Activated CD4-positive, alpha-beta T cell treated with anti-CD3 and anti-CD28 coated beads for 36 hours (primary cell): ENCODE measurements at regions of chr2 and their contacts with region 1.

Region 1: DNA sequence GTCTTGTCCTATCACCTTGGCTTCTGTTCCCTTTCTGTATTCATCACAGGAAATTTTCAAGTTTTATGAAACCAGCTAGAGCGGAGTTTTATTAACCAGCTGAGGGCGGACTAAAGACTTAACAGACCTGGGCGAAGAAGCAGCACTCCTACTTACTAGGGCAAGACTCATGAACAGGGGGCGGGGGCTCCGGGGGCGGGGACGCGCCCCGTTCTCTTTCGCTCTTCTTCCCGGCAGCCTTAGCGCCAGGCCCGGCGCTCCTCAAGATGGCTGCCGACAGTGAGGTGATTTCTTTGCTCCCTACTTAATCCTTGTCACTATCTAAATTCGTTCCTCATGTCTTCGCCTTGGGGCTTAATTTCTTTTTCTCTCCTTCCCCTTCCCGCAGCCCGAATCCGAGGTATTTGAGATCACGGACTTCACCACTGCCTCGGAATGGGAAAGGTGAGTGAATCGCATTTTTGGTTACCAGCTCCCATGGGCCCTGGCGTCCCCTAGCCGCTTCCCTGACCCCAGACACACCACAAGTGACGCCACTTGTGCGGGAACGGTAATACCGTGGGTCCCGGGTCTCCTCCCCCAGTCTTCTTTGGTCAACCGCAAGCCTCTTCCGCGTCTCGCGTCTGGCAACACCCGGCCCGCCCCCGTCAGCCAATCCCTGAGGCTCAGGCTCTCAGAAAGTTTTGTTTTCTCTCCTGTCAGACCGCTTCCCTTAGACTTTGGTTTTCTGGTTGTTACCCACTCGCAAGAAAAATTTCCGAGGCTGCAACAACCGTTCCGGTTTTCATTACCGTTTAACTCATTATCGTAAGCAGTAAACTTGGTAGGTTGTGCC is at the start of gene RAB3GAP1:
- DNase-seq: peak; percentile 96
- ATAC-seq: peak; percentile 79
- H3K4me3 Mint-ChIP-seq: peak within 1 kb of the TSS; percentile 92
- H3K27ac Mint-ChIP-seq: peak within 1 kb of the TSS; percentile 100
- H3K4me1 Mint-ChIP-seq: peaks cover 40% of the 10 kb centered on the region
- H3K27me3 Mint-ChIP-seq: no peaks in the 10 kb centered on the region
- total RNA-seq, gene RAB3GAP1: 34.5 to 39.8 TPM

Region 2: DNA sequence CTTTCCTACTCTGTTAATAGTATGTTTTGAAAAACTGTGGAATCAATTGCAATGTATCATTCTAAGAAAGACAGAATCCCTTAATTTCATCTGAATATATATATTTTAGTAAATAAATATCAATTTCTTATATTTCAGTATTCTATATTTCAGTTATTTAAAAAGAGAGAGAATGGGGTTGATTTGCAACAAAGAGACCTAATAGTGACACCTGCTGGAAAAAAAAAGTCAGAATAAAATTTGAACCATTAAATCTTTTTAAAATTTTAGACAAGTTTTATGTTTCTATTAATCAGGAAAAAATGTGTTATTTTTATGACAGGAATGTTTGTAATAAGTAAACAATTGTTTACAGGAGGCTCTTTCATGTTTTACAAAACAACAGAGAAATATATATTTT is 154.3 kb before region 1 on chr2:
- CTCF ChIA-PET with region 1: no interaction called
- POLR2A ChIA-PET with region 1: no interaction called
- intact Hi-C with region 1: no loop called
- DNase-seq: no peak
- ATAC-seq: no peak
- H3K4me3 Mint-ChIP-seq: no peak overlapping the region
- H3K27ac Mint-ChIP-seq: no peak overlapping the region
- H3K4me1 Mint-ChIP-seq: no peaks in the 10 kb centered on the region
- H3K27me3 Mint-ChIP-seq: no peaks in the 10 kb centered on the region

Region 3: DNA sequence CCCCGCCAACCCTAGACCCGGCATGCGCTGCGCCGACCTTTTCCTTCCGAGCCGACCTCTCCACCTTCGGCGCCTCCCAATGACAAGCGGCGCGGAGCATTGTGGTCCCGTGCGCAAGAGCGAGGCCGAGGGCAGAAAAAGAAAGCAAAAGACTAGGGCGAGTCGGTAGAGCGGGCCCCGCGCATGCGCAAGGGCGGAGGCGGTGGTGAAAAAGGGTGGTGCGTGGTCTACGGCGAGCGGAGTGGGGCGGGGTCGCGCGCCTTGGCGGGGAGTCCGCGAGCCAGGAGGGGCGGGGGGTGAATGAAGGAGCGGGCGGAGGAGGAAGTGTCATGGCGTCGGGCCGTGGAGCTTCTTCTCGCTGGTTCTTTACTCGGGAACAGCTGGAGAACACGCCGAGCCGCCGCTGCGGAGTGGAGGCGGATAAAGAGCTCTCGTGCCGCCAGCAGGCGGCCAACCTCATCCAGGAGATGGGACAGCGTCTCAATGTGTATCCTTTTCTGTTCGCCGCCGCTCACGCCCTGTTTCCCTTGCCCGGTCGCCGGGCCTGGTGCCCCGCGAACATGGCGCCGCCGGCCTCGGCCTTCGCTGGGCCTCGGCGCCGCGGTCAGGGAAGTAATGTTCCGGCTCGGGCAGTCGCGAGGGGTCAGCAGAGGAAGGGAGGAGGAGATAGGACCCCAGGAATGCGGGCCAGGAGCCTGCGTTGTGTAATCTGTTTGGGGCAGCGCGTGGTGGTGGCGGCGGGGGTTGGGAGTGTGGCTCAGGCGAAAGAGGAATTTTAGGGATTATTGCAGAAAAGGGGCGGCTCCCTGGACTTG is 133.5 kb before region 1 on chr2 and contains the start of gene CCNT2:
- CTCF ChIA-PET with region 1: no interaction called
- POLR2A ChIA-PET with region 1: interaction called, 3 read pairs
- intact Hi-C with region 1: loop called (anchors 1 kb)
- DNase-seq: peak; percentile 100
- ATAC-seq: peak; percentile 89
- H3K4me3 Mint-ChIP-seq: peak within 1 kb of the TSS; percentile 92
- H3K27ac Mint-ChIP-seq: peak within 1 kb of the TSS; percentile 98
- H3K4me1 Mint-ChIP-seq: peaks cover 27% of the 10 kb centered on the region
- H3K27me3 Mint-ChIP-seq: no peaks in the 10 kb centered on the region
- total RNA-seq, gene CCNT2: 29.3 to 36.6 TPM

Region 4: DNA sequence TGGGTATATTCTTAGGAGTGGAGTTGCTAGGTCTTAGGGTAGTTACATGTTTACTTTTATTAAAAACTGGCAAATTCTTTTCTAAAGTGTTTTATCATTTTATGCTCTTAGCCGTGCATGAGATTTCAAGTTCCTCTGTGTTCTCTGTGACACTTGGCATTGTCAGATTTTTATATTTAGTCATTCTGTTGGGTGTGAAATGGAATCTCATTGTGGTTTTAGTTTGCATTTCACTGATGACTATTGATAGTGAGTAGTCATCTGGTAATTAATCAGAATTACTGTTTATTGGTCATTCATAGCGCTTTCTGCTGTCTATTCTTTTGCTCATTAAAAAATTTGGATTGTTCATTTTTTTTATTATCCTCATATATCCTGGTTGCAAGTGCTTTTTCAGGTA is 34.0 kb after region 1 on chr2:
- CTCF ChIA-PET with region 1: interaction called, 3 read pairs
- POLR2A ChIA-PET with region 1: no interaction called
- intact Hi-C with region 1: loop called in 1 of 2 experiments (anchors 2 kb)
- DNase-seq: no peak
- ATAC-seq: peak; percentile 72
- H3K4me3 Mint-ChIP-seq: no peak overlapping the region
- H3K27ac Mint-ChIP-seq: no peak overlapping the region
- H3K4me1 Mint-ChIP-seq: peaks cover 29% of the 10 kb centered on the region
- H3K27me3 Mint-ChIP-seq: no peaks in the 10 kb centered on the region

Region 5: GRCh38 chr2:135607561-135607960 is 555.3 kb after region 1 on chr2:
- CTCF ChIA-PET with region 1: no interaction called
- POLR2A ChIA-PET with region 1: interaction called, 12 read pairs
- intact Hi-C with region 1: no loop called
- DNase-seq: no peak
- ATAC-seq: no peak
- H3K4me3 Mint-ChIP-seq: no peak overlapping the region
- H3K27ac Mint-ChIP-seq: no peak overlapping the region
- H3K4me1 Mint-ChIP-seq: no peaks in the 10 kb centered on the region
- H3K27me3 Mint-ChIP-seq: no peaks in the 10 kb centered on the region

Region 6: GRCh38 chr2:135820003-135820618 is 767.9 kb after region 1 on chr2:
- CTCF ChIA-PET with region 1: no interaction called
- POLR2A ChIA-PET with region 1: no interaction called
- intact Hi-C with region 1: loop called in 1 of 2 experiments (anchors 1 kb)
- DNase-seq: peak; percentile 94
- ATAC-seq: peak; percentile 93
- H3K4me3 Mint-ChIP-seq: peak overlapping the region; percentile 71
- H3K27ac Mint-ChIP-seq: peak overlapping the region; percentile 87
- H3K4me1 Mint-ChIP-seq: peaks cover 45% of the 10 kb centered on the region
- H3K27me3 Mint-ChIP-seq: no peaks in the 10 kb centered on the region

Region 7: DNA sequence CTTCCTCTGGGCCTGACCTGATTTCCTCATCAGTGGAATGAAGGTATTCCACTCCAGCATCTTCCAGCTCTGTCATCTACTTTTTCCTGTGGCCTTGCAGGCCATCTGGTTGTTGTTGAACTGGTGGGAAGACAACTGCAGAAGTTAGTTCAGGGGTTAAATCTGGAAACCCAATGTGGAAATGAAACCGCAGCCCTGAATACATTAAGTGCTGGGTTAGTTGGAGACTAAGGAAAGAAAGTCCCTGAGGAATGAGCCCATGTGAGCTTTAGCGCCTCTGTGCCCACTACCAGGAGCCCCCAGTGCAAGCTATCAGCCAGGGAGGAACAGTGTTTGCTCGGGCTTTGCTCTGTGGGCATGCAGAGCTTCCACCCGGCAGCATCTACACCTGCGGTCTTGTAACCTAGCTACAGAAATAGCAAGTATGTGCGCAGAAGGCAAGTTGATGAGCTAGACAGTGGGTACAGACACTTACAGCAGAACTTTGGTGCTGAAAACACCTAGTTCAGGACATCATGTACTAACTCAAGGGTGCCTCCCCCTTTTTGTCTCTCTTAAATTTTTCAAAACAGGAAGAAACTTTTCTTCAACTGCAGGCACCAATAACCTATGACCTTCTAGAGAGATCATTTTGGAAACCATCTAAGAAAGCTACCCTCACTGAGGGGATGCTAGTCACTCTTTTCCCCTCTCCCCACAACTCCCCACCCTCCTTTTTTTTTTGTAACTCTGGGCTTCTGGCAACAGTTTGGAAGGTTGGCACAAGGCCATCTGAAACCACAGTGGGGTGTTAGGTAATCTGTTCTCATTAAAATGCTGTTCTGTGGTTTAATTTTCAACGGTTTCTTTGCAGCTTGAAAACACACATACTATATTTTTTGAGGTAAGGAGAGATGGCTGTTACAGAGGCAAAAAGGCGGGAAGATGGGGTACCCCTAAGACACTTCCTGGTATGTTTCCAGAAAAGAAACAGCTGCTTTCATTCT is 1084.0 kb after region 1 on chr2:
- CTCF ChIA-PET with region 1: no interaction called
- POLR2A ChIA-PET with region 1: no interaction called
- intact Hi-C with region 1: loop called (anchors 5 kb)
- DNase-seq: peak; percentile 73
- ATAC-seq: peak; percentile 57
- H3K4me3 Mint-ChIP-seq: peak overlapping the region; percentile 20
- H3K27ac Mint-ChIP-seq: peak overlapping the region; percentile 78
- H3K4me1 Mint-ChIP-seq: peaks cover 91% of the 10 kb centered on the region
- H3K27me3 Mint-ChIP-seq: peaks cover 19% of the 10 kb centered on the region